ENCODE measurements at regions of chr20 and their contacts with region 1.

Region 1: DNA sequence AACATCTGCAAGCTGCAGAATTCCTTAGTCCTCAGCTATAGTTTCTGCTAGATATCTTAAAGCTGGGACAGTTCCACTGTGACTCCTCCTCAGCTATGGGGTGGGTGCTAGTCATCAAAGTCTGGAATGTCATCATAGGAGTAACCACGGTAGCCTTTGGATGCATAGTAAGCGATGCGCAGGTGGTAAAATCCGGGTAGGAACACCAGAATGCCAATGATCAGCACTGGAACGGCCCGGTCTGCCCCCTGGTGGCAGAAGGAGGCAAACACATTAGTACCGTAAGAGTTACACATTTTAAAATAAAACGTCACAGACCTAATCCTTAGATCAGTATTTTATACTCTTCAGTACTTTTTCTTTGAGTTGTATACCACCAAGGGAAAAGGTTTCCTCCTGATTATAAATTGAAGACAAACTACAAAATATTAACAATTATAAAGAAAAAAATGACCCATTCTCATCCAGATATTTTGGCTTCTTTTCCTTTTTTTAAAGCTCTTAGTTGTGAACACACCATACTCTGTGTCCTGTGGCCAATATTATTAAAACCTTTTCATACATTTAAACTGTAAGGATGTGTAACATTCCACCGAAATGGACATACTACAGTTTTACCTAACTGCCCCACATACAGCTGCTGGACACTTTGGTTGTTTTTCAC is 18.9 kb downstream of the PCNA start:
- DNase-seq: peak; percentile 39 to 85 (median 78)
- ATAC-seq: peak; percentile 96
- H3K4me3 ChIP-seq: no peak overlapping the region
- H3K4me3 Mint-ChIP-seq: no peak overlapping the region
- H3K27ac ChIP-seq: peak overlapping the region in 1 of 2 experiments; percentile 49
- H3K27ac Mint-ChIP-seq: peak overlapping the region; percentile 57
- H3K4me1 ChIP-seq: peaks cover 3% of the 10 kb centered on the region
- H3K4me1 Mint-ChIP-seq: peaks cover 8% of the 10 kb centered on the region
- H3K27me3 ChIP-seq: no peaks in the 10 kb centered on the region
- H3K27me3 Mint-ChIP-seq: no peaks in the 10 kb centered on the region
- CTCF ChIP-seq: peak; percentile 94

Region 2: DNA sequence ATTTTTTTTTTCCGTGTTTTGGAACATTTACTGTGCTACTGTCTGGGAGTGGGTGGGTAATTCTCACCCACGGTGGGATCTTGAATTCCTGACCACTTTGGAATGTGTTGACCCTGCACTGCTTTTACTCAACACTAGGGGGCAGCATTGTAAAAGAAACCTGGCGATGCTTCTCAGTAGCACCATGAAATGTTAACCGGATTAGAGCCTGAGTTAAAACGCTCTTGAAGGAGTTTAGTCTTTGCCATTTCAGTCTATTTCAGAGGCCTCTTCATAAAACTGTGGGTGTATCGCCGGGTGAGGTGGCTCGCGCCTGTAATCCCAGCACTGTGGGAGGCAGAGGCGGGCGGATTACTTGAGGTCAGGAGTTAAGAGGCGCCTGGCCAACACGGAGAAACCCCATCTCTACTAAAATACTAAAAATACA is 493.5 kb before region 1 on chr20:
- CTCF ChIA-PET with region 1: no interaction called
- POLR2A ChIA-PET with region 1: no interaction called
- intact Hi-C with region 1: loop called (anchors 2 to 5 kb)
- DNase-seq: peak; percentile 29 to 77 (median 61)
- ATAC-seq: peak; percentile 88
- H3K4me3 ChIP-seq: no peak overlapping the region
- H3K4me3 Mint-ChIP-seq: no peak overlapping the region
- H3K27ac ChIP-seq: no peak overlapping the region
- H3K27ac Mint-ChIP-seq: no peak overlapping the region
- H3K4me1 ChIP-seq: no peaks in the 10 kb centered on the region
- H3K4me1 Mint-ChIP-seq: peaks cover 1% of the 10 kb centered on the region
- H3K27me3 ChIP-seq: no peaks in the 10 kb centered on the region
- H3K27me3 Mint-ChIP-seq: peaks cover 31% of the 10 kb centered on the region
- CTCF ChIP-seq: peak; percentile 99

Region 3: GRCh38 chr20:4956200-4956810 is 144.5 kb before region 1 on chr20:
- CTCF ChIA-PET with region 1: interaction called, 13 read pairs
- POLR2A ChIA-PET with region 1: no interaction called
- intact Hi-C with region 1: loop called (anchors 1 kb)
- DNase-seq: peak in 2 of 9 experiments; percentile 71 to 78
- ATAC-seq: peak; percentile 88
- H3K4me3 ChIP-seq: no peak overlapping the region
- H3K4me3 Mint-ChIP-seq: no peak overlapping the region
- H3K27ac ChIP-seq: no peak overlapping the region
- H3K27ac Mint-ChIP-seq: no peak overlapping the region
- H3K4me1 ChIP-seq: peaks cover under 1% of the 10 kb centered on the region
- H3K4me1 Mint-ChIP-seq: peaks cover 8% of the 10 kb centered on the region
- H3K27me3 ChIP-seq: no peaks in the 10 kb centered on the region
- H3K27me3 Mint-ChIP-seq: no peaks in the 10 kb centered on the region
- CTCF ChIP-seq: peak; percentile 92

Region 4: DNA sequence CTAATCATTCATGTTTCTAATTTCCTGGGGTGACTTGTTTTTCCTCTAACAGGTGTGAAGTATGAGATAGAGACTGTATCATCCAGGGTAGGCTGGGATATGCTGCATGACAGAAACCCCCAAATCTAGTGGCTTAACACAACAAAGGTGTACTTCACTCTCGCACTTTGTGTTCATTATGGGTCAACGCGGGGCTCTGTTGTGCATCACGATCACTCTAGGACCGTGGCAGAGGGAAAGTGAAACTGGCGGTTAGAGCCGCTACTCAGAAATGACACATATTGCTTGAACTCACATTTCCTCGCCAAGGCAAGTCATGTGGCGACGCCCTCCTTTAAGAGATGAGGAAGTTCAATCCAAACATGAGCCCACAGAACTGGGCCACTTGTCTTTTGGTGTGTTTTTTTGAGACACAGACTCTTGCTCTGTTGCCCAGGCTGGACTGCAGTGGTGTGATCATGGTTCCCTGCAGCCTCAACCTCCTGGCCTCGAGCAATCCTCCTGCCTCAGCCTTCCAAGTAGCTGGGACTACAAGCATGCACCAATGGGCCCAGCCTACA is 22.3 kb before region 1 on chr20:
- CTCF ChIA-PET with region 1: interaction called, 17 read pairs
- POLR2A ChIA-PET with region 1: no interaction called
- intact Hi-C with region 1: no loop called
- DNase-seq: peak; percentile 54 to 93 (median 78)
- ATAC-seq: peak; percentile 92
- H3K4me3 ChIP-seq: peak overlapping the region; percentile 44
- H3K4me3 Mint-ChIP-seq: peak overlapping the region; percentile 83
- H3K27ac ChIP-seq: peak overlapping the region; percentile 81 to 84
- H3K27ac Mint-ChIP-seq: peak overlapping the region; percentile 97
- H3K4me1 ChIP-seq: peaks cover 17% of the 10 kb centered on the region
- H3K4me1 Mint-ChIP-seq: peaks cover 24% of the 10 kb centered on the region
- H3K27me3 ChIP-seq: no peaks in the 10 kb centered on the region
- H3K27me3 Mint-ChIP-seq: no peaks in the 10 kb centered on the region
- CTCF ChIP-seq: no peak

Region 5: GRCh38 chr20:5119435-5120188 is 18.8 kb after region 1 on chr20 and contains the start of gene PCNA:
- CTCF ChIA-PET with region 1: interaction called, 12 read pairs
- POLR2A ChIA-PET with region 1: interaction called, 3 read pairs
- intact Hi-C with region 1: no loop called
- DNase-seq: peak; percentile 89 to 98 (median 95)
- ATAC-seq: peak; percentile 94
- H3K4me3 ChIP-seq: peak within 1 kb of the TSS; percentile 89 to 95
- H3K4me3 Mint-ChIP-seq: peak within 1 kb of the TSS; percentile 95
- H3K27ac ChIP-seq: peak within 1 kb of the TSS; percentile 84 to 86
- H3K27ac Mint-ChIP-seq: peak within 1 kb of the TSS; percentile 97
- H3K4me1 ChIP-seq: peaks cover 20% of the 10 kb centered on the region
- H3K4me1 Mint-ChIP-seq: peaks cover 30% of the 10 kb centered on the region
- H3K27me3 ChIP-seq: no peaks in the 10 kb centered on the region
- H3K27me3 Mint-ChIP-seq: no peaks in the 10 kb centered on the region
- CTCF ChIP-seq: no peak
- total RNA-seq, gene PCNA: 40.2 to 40.6 TPM

Region 6: GRCh38 chr20:5191829-5192569 is 91.2 kb after region 1 on chr20:
- CTCF ChIA-PET with region 1: interaction called, 19 read pairs
- POLR2A ChIA-PET with region 1: no interaction called
- intact Hi-C with region 1: no loop called
- DNase-seq: peak in 6 of 9 experiments; percentile 5 to 79 (median 43)
- ATAC-seq: peak; percentile 80
- H3K4me3 ChIP-seq: no peak overlapping the region
- H3K4me3 Mint-ChIP-seq: no peak overlapping the region
- H3K27ac ChIP-seq: peak overlapping the region in 1 of 2 experiments; percentile 14
- H3K27ac Mint-ChIP-seq: peak overlapping the region; percentile 72
- H3K4me1 ChIP-seq: no peaks in the 10 kb centered on the region
- H3K4me1 Mint-ChIP-seq: peaks cover 3% of the 10 kb centered on the region
- H3K27me3 ChIP-seq: no peaks in the 10 kb centered on the region
- H3K27me3 Mint-ChIP-seq: no peaks in the 10 kb centered on the region
- CTCF ChIP-seq: peak; percentile 69

Region 7: GRCh38 chr20:6651016-6651415 is 1550.2 kb after region 1 on chr20:
- CTCF ChIA-PET with region 1: no interaction called
- POLR2A ChIA-PET with region 1: no interaction called
- intact Hi-C with region 1: no loop called
- DNase-seq: no peak
- ATAC-seq: no peak
- H3K4me3 ChIP-seq: no peak overlapping the region
- H3K4me3 Mint-ChIP-seq: no peak overlapping the region
- H3K27ac ChIP-seq: no peak overlapping the region
- H3K27ac Mint-ChIP-seq: no peak overlapping the region
- H3K4me1 ChIP-seq: no peaks in the 10 kb centered on the region
- H3K4me1 Mint-ChIP-seq: no peaks in the 10 kb centered on the region
- H3K27me3 ChIP-seq: no peaks in the 10 kb centered on the region
- H3K27me3 Mint-ChIP-seq: no peaks in the 10 kb centered on the region
- CTCF ChIP-seq: no peak